ENCODE measurements at regions of chr6 and their contacts with region 1.

Region 1: GRCh38 chr6:71342772-71343171 is 54.2 kb downstream of the OGFRL1 start:
- DNase-seq: no peak
- ATAC-seq: no peak
- H3K4me3 ChIP-seq: no peak overlapping the region
- H3K27ac ChIP-seq: no peak overlapping the region
- H3K4me1 ChIP-seq: no peaks in the 10 kb centered on the region
- H3K27me3 ChIP-seq: no peaks in the 10 kb centered on the region
- CTCF ChIP-seq: no peak
- EP300 ChIP-seq: no peak
- POLR2A ChIP-seq: no peak
- RAD21 ChIP-seq: no peak

Region 2: DNA sequence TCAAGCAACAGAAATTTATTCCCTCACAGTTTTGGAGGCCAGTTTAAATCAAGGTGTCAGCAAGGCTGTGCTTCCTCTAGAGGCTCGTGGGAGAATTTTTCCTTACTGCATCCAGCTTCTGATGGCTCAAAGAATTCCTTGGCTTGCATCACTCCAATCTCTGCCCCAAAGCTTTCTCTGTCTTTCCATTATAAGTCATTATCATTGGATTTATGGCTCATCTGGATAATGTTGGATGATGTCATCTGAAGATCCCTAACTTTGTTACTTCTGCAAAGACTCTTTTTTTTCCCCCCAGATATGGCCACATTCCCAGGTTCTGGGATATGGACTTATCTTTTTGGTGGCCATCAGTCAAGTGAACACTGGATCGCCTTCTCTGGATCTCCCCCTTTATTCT is 239.6 kb before region 1 on chr6:
- CTCF ChIA-PET with region 1: no interaction called
- POLR2A ChIA-PET with region 1: no interaction called
- RAD21 ChIA-PET with region 1: no interaction called
- SMC1A ChIA-PET with region 1: no interaction called
- in situ Hi-C with region 1: no loop called
- intact Hi-C with region 1: loop called (anchors 5 kb)
- DNase-seq: no peak
- ATAC-seq: no peak
- H3K4me3 ChIP-seq: no peak overlapping the region
- H3K27ac ChIP-seq: no peak overlapping the region
- H3K4me1 ChIP-seq: no peaks in the 10 kb centered on the region
- H3K27me3 ChIP-seq: no peaks in the 10 kb centered on the region
- CTCF ChIP-seq: no peak
- EP300 ChIP-seq: no peak
- POLR2A ChIP-seq: no peak
- RAD21 ChIP-seq: no peak

Region 3: DNA sequence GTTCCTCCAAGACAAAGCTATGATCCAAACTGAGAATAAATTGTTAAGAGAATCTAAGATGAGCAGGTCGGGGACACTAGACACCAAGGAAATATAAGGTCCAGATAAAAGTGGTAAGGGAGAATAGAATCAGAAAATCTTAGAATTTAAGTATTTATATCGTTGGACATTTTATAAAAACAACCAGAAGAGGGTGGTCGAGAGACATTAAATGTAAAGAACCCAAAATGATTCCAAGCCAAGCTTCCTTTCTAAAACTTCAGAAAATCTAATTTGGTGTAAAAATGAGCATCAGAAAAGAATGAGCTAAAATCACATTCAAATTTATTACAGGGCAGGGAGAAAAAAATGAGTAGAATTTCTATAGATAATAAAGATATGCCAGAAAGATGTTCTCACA is 152.0 kb before region 1 on chr6:
- CTCF ChIA-PET with region 1: interaction called, 10 read pairs
- POLR2A ChIA-PET with region 1: no interaction called
- RAD21 ChIA-PET with region 1: interaction called, 4 read pairs
- SMC1A ChIA-PET with region 1: interaction called, 7 read pairs
- in situ Hi-C with region 1: no loop called
- intact Hi-C with region 1: no loop called
- DNase-seq: no peak
- ATAC-seq: no peak
- H3K4me3 ChIP-seq: no peak overlapping the region
- H3K27ac ChIP-seq: no peak overlapping the region
- H3K4me1 ChIP-seq: no peaks in the 10 kb centered on the region
- H3K27me3 ChIP-seq: no peaks in the 10 kb centered on the region
- CTCF ChIP-seq: peak in 2 of 3 experiments; percentile 14 to 42; a peak in 2 of 6 replicates
- EP300 ChIP-seq: no peak
- POLR2A ChIP-seq: no peak
- RAD21 ChIP-seq: peak; percentile 52